ENCODE measurements at regions of chr3 and their contacts with region 1.

Region 1: GRCh38 chr3:100603469-100603868 is 5.9 kb upstream of the ADGRG7 start:
- DNase-seq: peak; percentile 10
- ATAC-seq: peak; percentile 71
- H3K4me3 Mint-ChIP-seq: peak overlapping the region; percentile 54
- H3K27ac Mint-ChIP-seq: peak overlapping the region; percentile 73
- H3K4me1 Mint-ChIP-seq: peaks cover 15% of the 10 kb centered on the region
- H3K27me3 Mint-ChIP-seq: peaks cover 2% of the 10 kb centered on the region
- CTCF ChIP-seq: peak; percentile 24

Region 2: DNA sequence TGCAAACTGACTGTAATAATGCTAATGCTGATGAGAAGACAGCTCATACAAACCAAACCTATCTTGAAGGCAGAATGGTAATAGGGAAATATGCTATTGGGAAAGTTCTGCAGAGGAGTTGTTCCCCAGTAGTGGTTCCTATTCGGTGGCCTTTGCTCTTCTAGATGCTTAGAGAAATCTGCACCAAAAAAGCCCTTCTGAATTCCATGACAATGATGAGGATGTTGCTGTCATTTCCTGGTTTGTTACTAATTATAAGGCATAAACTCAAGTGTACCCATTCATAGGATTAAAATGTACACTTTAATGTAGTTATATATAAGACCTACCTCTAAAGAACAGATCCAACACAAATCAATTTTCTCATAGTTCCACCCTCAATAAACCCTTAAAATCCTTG is 232.7 kb before region 1 on chr3:
- CTCF ChIA-PET with region 1: no interaction called
- POLR2A ChIA-PET with region 1: no interaction called
- intact Hi-C with region 1: no loop called
- DNase-seq: no peak
- ATAC-seq: no peak
- H3K4me3 Mint-ChIP-seq: no peak overlapping the region
- H3K27ac Mint-ChIP-seq: no peak overlapping the region
- H3K4me1 Mint-ChIP-seq: no peaks in the 10 kb centered on the region
- H3K27me3 Mint-ChIP-seq: no peaks in the 10 kb centered on the region
- CTCF ChIP-seq: no peak

Region 3: GRCh38 chr3:100437721-100438622 is 165.5 kb before region 1 on chr3:
- CTCF ChIA-PET with region 1: no interaction called
- POLR2A ChIA-PET with region 1: no interaction called
- intact Hi-C with region 1: no loop called
- DNase-seq: no peak
- ATAC-seq: no peak
- H3K4me3 Mint-ChIP-seq: no peak overlapping the region
- H3K27ac Mint-ChIP-seq: no peak overlapping the region
- H3K4me1 Mint-ChIP-seq: peaks cover 8% of the 10 kb centered on the region
- H3K27me3 Mint-ChIP-seq: no peaks in the 10 kb centered on the region
- CTCF ChIP-seq: no peak

Region 4: DNA sequence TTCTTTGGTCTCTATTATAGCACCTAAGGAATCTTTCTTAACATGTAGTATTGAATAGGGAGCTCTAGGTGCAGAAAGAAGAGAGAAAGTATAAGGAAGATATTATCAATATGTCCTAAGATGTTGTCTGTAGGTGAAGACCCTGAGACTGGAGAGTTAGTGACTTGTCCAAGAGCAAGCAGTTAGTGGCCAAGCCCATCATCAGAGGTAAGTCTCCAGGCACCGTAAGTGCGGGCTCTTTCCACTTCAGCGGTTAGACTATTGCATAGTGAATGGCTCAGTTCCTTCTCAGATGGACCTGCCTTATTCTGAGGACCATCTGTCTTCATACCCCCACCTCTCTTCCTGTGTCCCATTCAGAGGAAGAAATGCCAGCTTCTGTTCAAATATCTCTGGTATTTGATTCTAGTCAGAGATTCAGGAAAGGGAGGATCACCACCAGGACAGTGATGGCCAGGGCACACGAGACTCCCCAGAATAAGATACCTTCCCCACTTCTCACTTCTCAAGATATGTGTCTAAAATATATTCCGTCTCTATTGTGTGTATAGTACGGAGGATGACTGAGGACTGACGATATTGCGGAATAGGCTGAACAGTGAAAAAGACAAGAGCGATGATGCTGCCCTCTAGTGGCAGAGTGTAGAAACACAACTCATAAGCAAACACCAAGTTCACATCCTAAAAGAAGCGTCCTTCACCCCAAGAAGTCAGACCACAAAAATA is 13.2 kb before region 1 on chr3:
- CTCF ChIA-PET with region 1: interaction called, 16 read pairs
- POLR2A ChIA-PET with region 1: no interaction called
- intact Hi-C with region 1: no loop called
- DNase-seq: peak; percentile 76
- ATAC-seq: peak; percentile 97
- H3K4me3 Mint-ChIP-seq: no peak overlapping the region
- H3K27ac Mint-ChIP-seq: no peak overlapping the region
- H3K4me1 Mint-ChIP-seq: peaks cover 3% of the 10 kb centered on the region
- H3K27me3 Mint-ChIP-seq: no peaks in the 10 kb centered on the region
- CTCF ChIP-seq: peak; percentile 83